Left ventricle myocardium superior (tissue), 1 donor: ENCODE measurements at regions of chr16 and their contacts with region 1.

Region 1: GRCh38 chr16:75234856-75235696 is 16.3 kb downstream of the CTRB1 start:
- DNase-seq: no peak
- ATAC-seq: no peak

Region 2: GRCh38 chr16:75181630-75182029 is 53.4 kb before region 1 on chr16:
- intact Hi-C with region 1: no loop called
- DNase-seq: no peak
- ATAC-seq: no peak

Region 3: GRCh38 chr16:75379911-75380847 is 145.1 kb after region 1 on chr16:
- intact Hi-C with region 1: loop called (anchors 5 kb)
- DNase-seq: no peak
- ATAC-seq: no peak

Region 4: DNA sequence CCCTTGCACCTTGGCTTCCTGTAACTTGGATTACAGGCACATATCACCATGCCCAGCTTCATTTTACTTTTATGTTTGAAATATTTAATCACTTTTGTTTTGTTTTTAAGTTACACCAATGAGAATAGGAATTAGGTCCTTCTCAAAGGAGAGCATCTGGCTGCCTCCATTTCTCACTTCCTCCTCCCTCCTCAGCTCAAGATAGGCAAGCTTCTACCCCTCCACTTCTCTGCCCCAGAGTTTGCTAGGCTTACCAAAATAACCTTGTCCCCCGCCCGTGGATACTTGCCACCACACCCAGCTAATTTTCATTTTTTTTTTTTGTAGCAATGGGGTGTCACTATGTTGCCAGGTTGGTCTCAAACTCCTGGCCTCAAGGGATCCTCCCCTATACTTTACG is 349.0 kb after region 1 on chr16:
- intact Hi-C with region 1: no loop called
- DNase-seq: no peak
- ATAC-seq: no peak